Posterior cingulate gyrus (tissue), 11 donors: ENCODE measurements at regions of chr3 and their contacts with region 1.

Region 1: GRCh38 chr3:137249311-137249940 is 291.6 kb downstream of the IL20RB start:
- DNase-seq: no peak

Region 2: GRCh38 chr3:137231126-137231525 is 18.3 kb before region 1 on chr3:
- intact Hi-C with region 1: loop called (anchors 1 kb)
- DNase-seq: no peak

Region 3: DNA sequence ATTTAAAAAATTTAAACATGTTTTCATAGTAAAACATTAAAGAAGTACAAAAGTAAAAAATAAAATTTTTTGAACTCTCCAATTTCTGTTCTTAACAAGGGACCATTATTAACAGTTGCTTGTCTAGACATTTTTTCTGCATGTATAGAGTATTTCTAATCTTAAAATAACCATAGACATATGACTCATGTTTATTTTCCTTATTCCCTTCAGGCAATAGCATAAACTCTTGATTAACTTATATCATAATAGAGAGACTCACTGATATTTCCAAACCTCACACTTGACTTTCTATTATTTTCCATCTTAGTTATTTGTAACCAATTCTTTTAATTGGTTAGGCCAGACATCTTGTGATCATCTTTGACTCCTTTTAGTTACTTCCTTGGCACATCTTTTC is 189.1 kb after region 1 on chr3:
- intact Hi-C with region 1: no loop called
- DNase-seq: no peak